ENCODE measurements at regions of chr9 and their contacts with region 1.

Region 1: GRCh38 chr9:34899535-34900158 is 58.4 kb upstream of the PHF24 start:
- DNase-seq: peak; percentile 85
- ATAC-seq: peak; percentile 97
- H3K4me3 ChIP-seq: no peak overlapping the region
- H3K4me3 Mint-ChIP-seq: no peak overlapping the region
- H3K27ac ChIP-seq: no peak overlapping the region
- H3K27ac Mint-ChIP-seq: no peak overlapping the region
- H3K4me1 ChIP-seq: no peaks in the 10 kb centered on the region
- H3K4me1 Mint-ChIP-seq: no peaks in the 10 kb centered on the region
- H3K27me3 ChIP-seq: peaks cover 0 to 11% (median 9%) of the 10 kb centered on the region in 4 experiments
- H3K27me3 Mint-ChIP-seq: peaks cover 31% of the 10 kb centered on the region
- CTCF ChIP-seq: peak; percentile 94

Region 2: DNA sequence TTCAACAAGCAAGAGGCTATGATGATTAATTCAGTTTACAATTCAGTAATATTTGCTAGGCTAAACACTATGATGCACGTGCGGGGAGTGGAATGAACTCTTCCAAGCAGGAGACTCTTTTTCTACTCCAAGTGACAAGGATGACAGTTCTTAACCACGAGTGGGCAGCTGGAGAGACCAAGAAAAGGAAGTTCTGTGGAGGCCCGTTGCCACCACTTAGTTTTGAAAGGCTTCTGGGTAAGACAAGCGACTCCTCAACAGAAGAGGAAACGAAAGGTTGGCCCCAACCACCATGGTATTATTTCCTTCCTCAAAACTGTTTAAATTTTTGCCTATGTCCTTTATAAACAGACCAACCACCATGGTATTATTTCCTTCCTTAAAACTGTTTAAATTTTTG is 776.0 kb before region 1 on chr9:
- CTCF ChIA-PET with region 1: no interaction called
- POLR2A ChIA-PET with region 1: no interaction called
- intact Hi-C with region 1: no loop called
- DNase-seq: peak; percentile 89
- ATAC-seq: peak; percentile 87
- H3K4me3 ChIP-seq: no peak overlapping the region
- H3K4me3 Mint-ChIP-seq: peak overlapping the region; percentile 78
- H3K27ac ChIP-seq: no peak overlapping the region
- H3K27ac Mint-ChIP-seq: peak overlapping the region; percentile 76
- H3K4me1 ChIP-seq: peaks cover 51 to 55% of the 10 kb centered on the region in 2 donors
- H3K4me1 Mint-ChIP-seq: peaks cover 49% of the 10 kb centered on the region
- H3K27me3 ChIP-seq: peaks cover 0 to 78% (median 59%) of the 10 kb centered on the region in 4 experiments
- H3K27me3 Mint-ChIP-seq: peaks cover 61% of the 10 kb centered on the region
- CTCF ChIP-seq: no peak

Region 3: GRCh38 chr9:34546834-34547827 is 352.5 kb before region 1 on chr9:
- CTCF ChIA-PET with region 1: no interaction called
- POLR2A ChIA-PET with region 1: no interaction called
- intact Hi-C with region 1: no loop called
- DNase-seq: peak; percentile 52
- ATAC-seq: peak; percentile 39
- H3K4me3 ChIP-seq: no peak overlapping the region
- H3K4me3 Mint-ChIP-seq: no peak overlapping the region
- H3K27ac ChIP-seq: no peak overlapping the region
- H3K27ac Mint-ChIP-seq: no peak overlapping the region
- H3K4me1 ChIP-seq: no peaks in the 10 kb centered on the region
- H3K4me1 Mint-ChIP-seq: no peaks in the 10 kb centered on the region
- H3K27me3 ChIP-seq: peaks cover 0 to 17% (median 5%) of the 10 kb centered on the region in 4 experiments
- H3K27me3 Mint-ChIP-seq: peaks cover 30% of the 10 kb centered on the region
- CTCF ChIP-seq: peak; percentile 43

Region 4: GRCh38 chr9:34884732-34885131 is 14.9 kb before region 1 on chr9:
- CTCF ChIA-PET with region 1: interaction called, 13 read pairs
- POLR2A ChIA-PET with region 1: no interaction called
- intact Hi-C with region 1: no loop called
- DNase-seq: peak; percentile 17
- ATAC-seq: no peak
- H3K4me3 ChIP-seq: no peak overlapping the region
- H3K4me3 Mint-ChIP-seq: no peak overlapping the region
- H3K27ac ChIP-seq: no peak overlapping the region
- H3K27ac Mint-ChIP-seq: no peak overlapping the region
- H3K4me1 ChIP-seq: peaks cover 0 to 9% of the 10 kb centered on the region in 2 donors
- H3K4me1 Mint-ChIP-seq: no peaks in the 10 kb centered on the region
- H3K27me3 ChIP-seq: peaks cover 0 to 10% (median 0%) of the 10 kb centered on the region in 4 experiments
- H3K27me3 Mint-ChIP-seq: peaks cover 9% of the 10 kb centered on the region
- CTCF ChIP-seq: no peak

Region 5: GRCh38 chr9:34994260-34994899 is 94.7 kb after region 1 on chr9:
- CTCF ChIA-PET with region 1: interaction called, 16 read pairs
- POLR2A ChIA-PET with region 1: interaction called, 3 read pairs
- intact Hi-C with region 1: no loop called
- DNase-seq: no peak
- ATAC-seq: no peak
- H3K4me3 ChIP-seq: no peak overlapping the region
- H3K4me3 Mint-ChIP-seq: no peak overlapping the region
- H3K27ac ChIP-seq: no peak overlapping the region
- H3K27ac Mint-ChIP-seq: no peak overlapping the region
- H3K4me1 ChIP-seq: peaks cover 5 to 9% of the 10 kb centered on the region in 2 donors
- H3K4me1 Mint-ChIP-seq: peaks cover 11% of the 10 kb centered on the region
- H3K27me3 ChIP-seq: no peaks in the 10 kb centered on the region
- H3K27me3 Mint-ChIP-seq: no peaks in the 10 kb centered on the region
- CTCF ChIP-seq: peak; percentile 28

Region 6: GRCh38 chr9:35096035-35096849 is 196.6 kb after region 1 on chr9 and contains the start of gene PIGO:
- CTCF ChIA-PET with region 1: interaction called, 61 read pairs
- POLR2A ChIA-PET with region 1: no interaction called
- intact Hi-C with region 1: no loop called
- DNase-seq: peak; percentile 94
- ATAC-seq: peak; percentile 92
- H3K4me3 ChIP-seq: peak within 1 kb of the TSS; percentile 61 to 100 (median 93)
- H3K4me3 Mint-ChIP-seq: peak within 1 kb of the TSS; percentile 90
- H3K27ac ChIP-seq: peak within 1 kb of the TSS; percentile 99
- H3K27ac Mint-ChIP-seq: peak within 1 kb of the TSS; percentile 94
- H3K4me1 ChIP-seq: peaks cover 7 to 16% of the 10 kb centered on the region in 2 donors
- H3K4me1 Mint-ChIP-seq: peaks cover 34% of the 10 kb centered on the region
- H3K27me3 ChIP-seq: no peaks in the 10 kb centered on the region
- H3K27me3 Mint-ChIP-seq: no peaks in the 10 kb centered on the region
- CTCF ChIP-seq: peak; percentile 85
- total RNA-seq, gene PIGO: 32.5 and 34.7 TPM in 2 replicates

Region 7: GRCh38 chr9:35258676-35259474 is 359.2 kb after region 1 on chr9:
- CTCF ChIA-PET with region 1: interaction called, 22 read pairs
- POLR2A ChIA-PET with region 1: no interaction called
- intact Hi-C with region 1: loop called (anchors 1 kb)
- DNase-seq: peak; percentile 56
- ATAC-seq: no peak
- H3K4me3 ChIP-seq: no peak overlapping the region
- H3K4me3 Mint-ChIP-seq: no peak overlapping the region
- H3K27ac ChIP-seq: no peak overlapping the region
- H3K27ac Mint-ChIP-seq: no peak overlapping the region
- H3K4me1 ChIP-seq: no peaks in the 10 kb centered on the region
- H3K4me1 Mint-ChIP-seq: no peaks in the 10 kb centered on the region
- H3K27me3 ChIP-seq: no peaks in the 10 kb centered on the region
- H3K27me3 Mint-ChIP-seq: peaks cover 12% of the 10 kb centered on the region
- CTCF ChIP-seq: peak; percentile 66

Region 8: GRCh38 chr9:35553670-35554543 is 654.3 kb after region 1 on chr9:
- CTCF ChIA-PET with region 1: interaction called, 11 read pairs
- POLR2A ChIA-PET with region 1: no interaction called
- intact Hi-C with region 1: loop called (anchors 10 kb)
- DNase-seq: peak; percentile 37
- ATAC-seq: peak; percentile 36
- H3K4me3 ChIP-seq: no peak overlapping the region
- H3K4me3 Mint-ChIP-seq: no peak overlapping the region
- H3K27ac ChIP-seq: no peak overlapping the region
- H3K27ac Mint-ChIP-seq: no peak overlapping the region
- H3K4me1 ChIP-seq: peaks cover under 1 to 1% of the 10 kb centered on the region in 2 donors
- H3K4me1 Mint-ChIP-seq: peaks cover 1% of the 10 kb centered on the region
- H3K27me3 ChIP-seq: no peaks in the 10 kb centered on the region
- H3K27me3 Mint-ChIP-seq: no peaks in the 10 kb centered on the region
- CTCF ChIP-seq: peak; percentile 60

Measured in B cell (primary cell).